OCI-LY7 (cell line): ENCODE measurements at regions of chr10 and their contacts with region 1.

Region 1: DNA sequence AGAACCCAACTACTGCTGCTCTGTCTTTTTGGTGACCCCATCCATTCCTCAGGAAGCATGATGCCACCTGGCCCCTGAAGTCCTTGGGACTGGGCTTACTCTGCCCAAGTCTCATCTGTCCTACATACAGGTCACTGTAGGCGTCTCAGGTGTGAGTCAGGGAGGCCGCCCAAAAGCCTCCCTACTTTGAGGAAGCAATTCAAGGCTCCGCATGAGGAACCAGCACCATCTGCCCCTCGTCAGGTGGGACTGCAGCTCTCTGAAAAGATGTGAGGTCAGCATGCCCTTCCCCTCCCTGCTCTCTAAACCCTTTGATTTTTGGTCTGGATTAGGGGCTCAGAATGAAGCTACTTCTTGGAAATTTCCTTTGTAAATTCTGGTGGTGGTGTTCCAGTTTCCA is 354.8 kb downstream of the CXCL12 start:
- DNase-seq: peak; percentile 71
- H3K4me3 ChIP-seq: no peak overlapping the region
- H3K27ac ChIP-seq: no peak overlapping the region
- H3K4me1 ChIP-seq: peaks cover 9% of the 10 kb centered on the region
- CTCF ChIP-seq: peak; percentile 83

Region 2: DNA sequence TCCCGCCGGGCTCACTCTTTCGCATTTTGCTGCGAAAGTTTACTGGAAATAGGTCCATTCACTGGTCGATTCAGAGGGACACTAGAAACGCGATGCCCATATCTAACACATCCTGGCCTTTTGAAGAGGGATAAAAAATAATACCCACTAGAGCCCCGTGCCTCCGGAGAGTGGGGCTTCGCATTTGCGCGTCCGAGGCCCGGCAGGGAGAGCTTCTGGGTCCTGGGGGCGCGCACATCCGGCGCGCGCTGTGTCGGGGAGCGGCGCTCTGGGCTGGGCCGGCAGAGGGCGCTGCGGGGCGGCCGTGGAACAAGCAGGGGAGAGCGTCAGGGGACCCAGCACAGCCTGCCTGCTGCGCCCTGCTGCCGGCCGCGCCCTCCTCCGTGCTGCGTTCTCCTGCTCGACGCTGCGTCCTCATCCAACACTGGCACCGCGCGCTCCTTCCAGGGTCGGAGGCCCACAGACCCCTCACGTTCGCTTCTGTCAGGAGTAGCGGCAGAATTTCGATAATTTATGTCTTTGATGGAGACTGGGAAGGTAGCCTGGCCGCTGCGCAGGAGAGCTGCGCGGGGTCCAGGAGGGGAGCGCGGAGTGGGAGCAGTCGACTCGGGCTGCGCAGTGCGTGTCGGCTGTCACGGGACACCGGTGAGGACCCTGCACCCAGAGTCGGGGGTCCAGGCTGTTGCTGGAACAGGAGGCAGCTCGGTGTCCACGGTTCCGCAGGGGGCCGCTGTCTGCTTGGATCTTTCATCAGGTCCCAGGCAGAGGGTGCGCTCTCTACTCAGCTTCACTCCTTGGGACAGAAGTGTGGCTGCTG is 340.0 kb before region 1 on chr10:
- CTCF ChIA-PET with region 1: no interaction called
- POLR2A ChIA-PET with region 1: no interaction called
- intact Hi-C with region 1: loop called (anchors 2 kb)
- DNase-seq: peak; percentile 38
- H3K4me3 ChIP-seq: no peak overlapping the region
- H3K27ac ChIP-seq: no peak overlapping the region
- H3K4me1 ChIP-seq: no peaks in the 10 kb centered on the region
- CTCF ChIP-seq: peak; percentile 82

Region 3: GRCh38 chr10:43885823-43886222 is 144.3 kb before region 1 on chr10:
- CTCF ChIA-PET with region 1: no interaction called
- POLR2A ChIA-PET with region 1: no interaction called
- intact Hi-C with region 1: loop called (anchors 1 kb)
- DNase-seq: peak; percentile 27
- H3K4me3 ChIP-seq: no peak overlapping the region
- H3K27ac ChIP-seq: no peak overlapping the region
- H3K4me1 ChIP-seq: peaks cover 17% of the 10 kb centered on the region
- CTCF ChIP-seq: peak; percentile 65

Region 4: DNA sequence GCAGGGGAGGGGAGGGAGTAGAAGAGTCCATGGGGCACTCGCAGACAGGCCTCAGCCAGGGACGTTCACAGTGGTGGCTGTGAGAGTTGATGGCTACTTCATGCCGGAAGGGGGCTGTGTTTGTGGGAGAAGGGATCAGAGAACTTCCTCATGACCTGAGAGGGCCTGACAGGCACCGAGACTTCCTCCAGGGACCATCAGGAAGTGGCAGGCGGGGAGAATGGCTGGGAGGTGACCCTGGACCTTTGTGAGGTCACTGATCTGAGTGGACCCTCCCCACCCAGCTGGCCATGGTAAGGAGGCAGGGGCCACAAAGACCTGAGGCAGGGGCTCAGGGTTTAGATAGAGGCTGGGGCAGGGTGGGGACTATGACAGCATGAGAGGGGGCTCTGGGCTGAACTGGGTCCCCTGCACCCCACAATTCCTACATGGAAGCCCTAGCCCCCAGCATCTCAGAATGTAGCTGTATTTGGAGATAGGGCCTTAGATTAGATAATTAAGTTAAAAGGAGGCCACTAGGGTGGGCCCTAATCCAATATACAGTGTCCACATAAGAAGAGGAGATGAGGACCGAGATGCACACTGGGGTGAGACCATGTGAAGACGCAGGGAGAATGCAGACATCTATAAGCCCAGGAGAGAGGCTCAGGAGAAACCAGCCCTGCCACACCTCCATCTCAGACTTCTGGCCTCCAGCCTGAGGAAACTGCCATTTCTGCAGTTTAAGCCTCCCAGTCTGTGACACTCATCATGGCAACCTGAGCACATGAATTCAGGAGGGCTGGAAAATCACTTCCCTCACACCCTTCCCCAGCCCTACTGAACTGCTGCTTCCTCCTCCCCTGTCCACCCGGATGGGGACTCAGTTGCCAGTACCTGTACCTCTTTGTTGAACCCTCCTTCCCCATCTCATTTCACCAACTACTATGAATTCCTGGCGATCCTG is 107.5 kb before region 1 on chr10:
- CTCF ChIA-PET with region 1: no interaction called
- POLR2A ChIA-PET with region 1: interaction called, 3 read pairs
- intact Hi-C with region 1: loop called (anchors 1 kb)
- DNase-seq: peak; percentile 50
- H3K4me3 ChIP-seq: peak overlapping the region; percentile 22
- H3K27ac ChIP-seq: peak overlapping the region; percentile 52
- H3K4me1 ChIP-seq: peaks cover 32% of the 10 kb centered on the region
- CTCF ChIP-seq: peak; percentile 48

Region 5: DNA sequence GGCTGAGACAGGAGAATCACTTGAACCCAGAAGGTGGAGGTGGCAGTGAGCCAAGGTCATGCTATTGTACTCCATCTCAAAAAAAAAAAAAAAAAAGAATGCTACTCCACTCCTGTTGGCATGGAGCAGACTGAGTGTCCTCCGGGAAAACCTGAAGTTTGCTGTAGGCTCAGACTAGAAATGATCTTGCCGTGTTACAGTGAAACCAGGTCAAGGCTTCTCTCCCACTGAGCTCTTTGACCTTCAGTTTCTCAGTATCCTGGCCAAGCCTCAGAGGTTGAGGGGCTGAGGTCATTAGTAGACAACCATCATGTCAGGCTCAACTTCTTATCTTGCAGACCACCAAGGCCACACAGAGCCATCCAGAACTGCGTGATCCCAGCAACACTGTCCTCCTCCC is 32.8 kb before region 1 on chr10:
- CTCF ChIA-PET with region 1: no interaction called
- POLR2A ChIA-PET with region 1: no interaction called
- intact Hi-C with region 1: no loop called
- DNase-seq: no peak
- H3K4me3 ChIP-seq: no peak overlapping the region
- H3K27ac ChIP-seq: no peak overlapping the region
- H3K4me1 ChIP-seq: no peaks in the 10 kb centered on the region
- CTCF ChIP-seq: no peak